ENCODE measurements at regions of chr1 and their contacts with region 1.

Region 1: DNA sequence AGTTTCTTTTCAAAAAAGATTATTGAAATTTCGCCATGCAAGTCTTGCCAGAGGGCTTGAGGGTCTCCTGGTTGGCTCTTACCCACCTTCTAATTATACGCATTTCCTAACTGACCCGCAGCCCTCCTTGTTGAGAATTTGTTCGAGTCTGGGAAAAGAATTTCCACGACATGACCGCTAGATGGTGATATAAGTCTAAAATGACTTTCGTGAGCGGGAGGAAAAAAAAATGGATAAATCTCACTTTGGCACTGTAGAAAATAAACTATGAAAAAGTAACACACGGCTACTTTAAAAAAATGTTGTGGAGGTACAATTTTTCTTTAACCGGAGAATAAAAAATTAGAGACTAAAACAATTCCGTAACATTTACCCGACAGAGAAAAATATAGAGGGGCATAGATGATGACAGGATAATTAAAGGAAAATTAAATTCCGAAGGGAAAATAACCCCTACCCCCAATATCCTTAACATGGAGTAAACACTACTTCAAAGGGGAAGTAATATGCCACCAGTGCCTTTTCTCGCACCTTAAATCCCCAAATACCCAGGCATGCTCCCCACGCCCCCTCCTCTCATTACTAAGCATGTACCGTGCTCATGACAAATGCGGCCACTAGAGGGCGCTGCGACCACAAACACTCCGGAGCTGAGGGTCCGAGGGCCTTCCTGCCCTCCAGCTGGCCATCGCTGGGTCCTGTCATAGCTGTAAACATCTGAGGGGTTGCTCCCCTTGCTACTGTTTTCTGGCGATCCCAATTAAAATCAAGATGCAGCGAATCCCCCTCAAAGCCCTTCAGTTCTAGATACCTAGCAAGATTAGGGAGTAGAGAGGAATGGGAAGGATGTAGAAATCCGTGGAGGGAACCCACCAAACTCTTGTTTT is 266.9 kb downstream of the ASTN1 start:
- DNase-seq: peak; percentile 62
- ATAC-seq: peak; percentile 70 to 83

Region 2: GRCh38 chr1:176949033-176949662 is 51.6 kb after region 1 on chr1:
- intact Hi-C with region 1: loop called in 1 of 2 experiments (anchors 5 kb)
- DNase-seq: peak; percentile 58
- ATAC-seq: peak; percentile 41 to 76

Region 3: DNA sequence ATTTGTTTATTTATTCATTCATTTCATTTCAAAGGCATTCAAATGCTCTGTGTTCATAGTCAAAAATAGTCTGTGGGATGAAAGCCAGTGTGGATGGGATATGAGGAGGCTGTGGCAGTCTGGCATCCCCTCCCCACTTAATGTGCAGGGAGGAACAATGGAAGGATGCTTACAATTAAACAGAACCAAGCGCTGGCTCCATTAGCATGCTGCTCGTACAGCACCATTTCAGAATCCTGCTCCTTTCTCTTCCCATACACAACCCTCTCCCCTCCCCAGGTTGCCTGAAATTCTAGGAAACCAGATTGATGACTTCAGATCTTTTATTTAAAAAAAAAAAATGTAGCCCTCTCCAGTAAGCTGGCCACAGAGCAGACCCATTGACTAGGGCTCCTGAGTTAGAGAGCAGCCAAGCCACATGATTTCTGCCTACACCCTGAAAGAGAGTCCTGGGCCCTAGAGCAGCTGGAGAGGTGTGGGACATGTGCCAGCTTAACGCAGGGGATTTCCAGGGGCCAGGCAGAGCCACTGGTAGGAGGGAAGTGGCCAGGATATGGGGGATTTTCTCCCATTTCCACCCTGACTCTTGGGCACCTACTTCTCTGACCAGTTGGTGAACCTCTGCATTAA is 61.7 kb after region 1 on chr1:
- intact Hi-C with region 1: no loop called
- DNase-seq: no peak
- ATAC-seq: no peak

Region 4: GRCh38 chr1:177181631-177182291 is 284.2 kb after region 1 on chr1:
- intact Hi-C with region 1: loop called (anchors 2 to 5 kb)
- DNase-seq: peak; percentile 58
- ATAC-seq: peak; percentile 89 to 94

Region 5: GRCh38 chr1:177355595-177355994 is 458.0 kb after region 1 on chr1:
- intact Hi-C with region 1: loop called in 1 of 2 experiments (anchors 5 kb)
- DNase-seq: no peak
- ATAC-seq: peak in 1 of 2 donors; percentile 54

Region 6: DNA sequence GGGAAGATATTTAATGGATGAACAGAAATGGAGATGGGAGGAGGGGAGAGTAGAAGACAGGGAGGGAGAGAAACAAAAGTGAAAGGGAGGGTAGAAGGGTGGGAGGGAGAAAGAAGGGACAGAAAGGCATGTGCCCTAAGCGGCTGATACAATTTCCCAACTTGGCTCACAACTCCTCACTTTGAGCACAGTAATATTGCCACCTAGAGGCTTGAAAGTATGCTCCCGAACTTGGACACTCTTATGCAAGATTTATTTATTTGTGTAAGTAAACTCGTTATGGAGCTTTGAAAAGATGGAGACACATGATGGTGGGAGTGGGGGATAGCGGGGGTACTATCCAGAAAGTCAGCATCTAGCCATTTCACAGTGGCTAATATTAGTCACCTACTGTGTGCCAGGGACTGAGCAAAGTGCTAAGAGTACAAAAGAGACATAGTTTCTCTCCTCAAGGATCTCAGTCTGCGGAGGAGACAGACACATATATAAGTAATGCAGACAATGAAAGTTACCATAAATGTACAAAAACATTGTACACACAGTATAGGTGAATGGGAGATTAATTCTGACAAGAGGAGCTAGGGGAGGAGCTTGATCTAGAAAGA is 882.6 kb after region 1 on chr1:
- intact Hi-C with region 1: loop called in 1 of 2 experiments (anchors 10 kb)
- DNase-seq: no peak
- ATAC-seq: peak; percentile 53 to 57

Region 7: DNA sequence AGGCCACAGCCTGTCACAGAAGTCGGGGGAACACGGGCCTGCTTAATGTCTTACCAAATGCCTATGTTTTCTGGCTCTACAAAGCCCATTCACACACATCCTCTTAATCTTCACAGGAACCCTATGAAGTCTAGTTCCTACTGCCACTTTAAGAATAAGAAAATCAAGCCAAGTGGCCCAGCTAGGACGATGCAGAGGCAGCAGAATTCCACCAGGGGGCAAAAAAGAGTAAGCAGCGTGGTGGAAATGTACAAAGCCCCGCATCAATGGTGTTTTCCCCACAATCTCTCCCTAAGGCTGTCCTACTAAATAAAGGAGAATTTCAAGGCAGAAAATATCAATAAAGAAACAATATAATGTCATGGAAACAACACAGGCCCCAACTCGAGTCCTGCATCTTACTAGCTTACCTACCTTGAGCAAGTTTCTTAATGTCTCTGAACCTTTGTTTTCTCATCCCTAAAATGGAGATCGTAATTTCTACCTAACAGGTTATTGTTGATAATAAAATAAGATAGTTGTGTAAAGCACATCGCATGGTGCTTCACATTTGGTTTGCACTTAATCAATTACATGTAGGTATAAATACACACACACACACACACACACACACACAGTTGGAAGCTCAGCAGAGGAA is 1050.9 kb after region 1 on chr1:
- intact Hi-C with region 1: loop called (anchors 5 kb)
- DNase-seq: peak; percentile 40
- ATAC-seq: peak; percentile 52 to 64

Measured in left cardiac atrium (tissue), 4 donors.